ENCODE measurements at regions of chr1 and their contacts with region 1.

Region 1: DNA sequence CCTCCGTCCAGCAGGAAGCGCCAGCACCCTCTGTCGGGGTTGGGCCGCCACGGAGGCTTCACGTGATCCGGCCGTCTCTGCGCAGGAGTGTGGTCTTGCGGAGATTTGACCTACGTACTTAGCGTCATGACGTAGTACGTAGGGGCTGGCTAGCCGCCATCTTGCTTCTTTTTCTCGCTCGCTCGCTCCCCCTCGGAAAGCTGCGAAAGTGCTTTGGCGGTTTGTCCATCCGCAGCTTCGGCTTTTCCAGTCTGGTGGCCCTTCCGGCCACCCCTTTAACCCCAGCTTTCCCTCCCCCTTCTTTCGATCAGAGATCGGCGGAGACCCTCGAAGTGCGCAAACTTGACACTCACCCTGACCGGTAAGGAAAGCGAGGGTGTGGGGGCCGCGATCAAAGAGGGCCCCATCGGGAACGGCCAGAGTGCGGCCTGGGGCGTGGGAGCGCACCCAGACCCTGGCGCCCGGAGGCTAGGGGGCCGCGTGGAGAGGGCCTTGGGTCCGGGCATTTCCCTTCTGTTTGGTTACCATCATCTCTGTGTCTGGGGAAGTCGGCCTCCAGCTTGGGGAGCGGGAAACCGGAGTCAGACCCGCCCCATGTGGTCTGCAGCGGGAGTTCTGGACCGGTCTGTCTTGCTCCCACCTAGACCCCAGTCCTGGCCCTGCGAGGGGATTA is at the start of gene PRRC2C:
- DNase-seq: peak; percentile 100
- H3K4me3 Mint-ChIP-seq: peak within 1 kb of the TSS; percentile 80
- H3K27ac Mint-ChIP-seq: peak within 1 kb of the TSS; percentile 92
- H3K4me1 Mint-ChIP-seq: peaks cover 38% of the 10 kb centered on the region
- H3K27me3 Mint-ChIP-seq: no peaks in the 10 kb centered on the region
- CTCF ChIP-seq: peak; percentile 71
- total RNA-seq, gene PRRC2C: 296 and 298 TPM in 2 replicates

Region 2: DNA sequence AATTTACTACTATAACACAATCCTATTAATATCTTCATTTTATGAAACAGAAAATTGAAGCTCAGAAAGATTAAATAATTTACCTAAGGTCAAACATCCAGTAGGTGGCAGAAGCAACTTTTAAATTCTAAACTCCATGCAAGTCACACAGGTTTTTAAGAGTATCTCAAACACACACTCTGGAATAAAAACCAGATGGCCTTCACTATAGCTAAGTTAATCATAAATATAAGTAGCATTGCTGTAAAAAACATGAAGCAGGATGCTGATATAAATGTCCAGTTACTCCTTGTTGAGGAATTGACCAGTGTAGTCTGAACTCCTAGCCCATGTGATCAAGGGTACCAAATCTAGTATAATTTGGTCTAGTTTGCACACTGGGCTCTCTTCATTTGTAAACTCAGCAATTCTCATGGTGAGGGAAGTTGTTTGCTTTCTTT is 404.2 kb before region 1 on chr1:
- CTCF ChIA-PET with region 1: no interaction called
- POLR2A ChIA-PET with region 1: no interaction called
- intact Hi-C with region 1: loop called (anchors 5 kb)
- DNase-seq: peak; percentile 52
- H3K4me3 Mint-ChIP-seq: no peak overlapping the region
- H3K27ac Mint-ChIP-seq: no peak overlapping the region
- H3K4me1 Mint-ChIP-seq: no peaks in the 10 kb centered on the region
- H3K27me3 Mint-ChIP-seq: no peaks in the 10 kb centered on the region
- CTCF ChIP-seq: peak; percentile 34

Region 3: DNA sequence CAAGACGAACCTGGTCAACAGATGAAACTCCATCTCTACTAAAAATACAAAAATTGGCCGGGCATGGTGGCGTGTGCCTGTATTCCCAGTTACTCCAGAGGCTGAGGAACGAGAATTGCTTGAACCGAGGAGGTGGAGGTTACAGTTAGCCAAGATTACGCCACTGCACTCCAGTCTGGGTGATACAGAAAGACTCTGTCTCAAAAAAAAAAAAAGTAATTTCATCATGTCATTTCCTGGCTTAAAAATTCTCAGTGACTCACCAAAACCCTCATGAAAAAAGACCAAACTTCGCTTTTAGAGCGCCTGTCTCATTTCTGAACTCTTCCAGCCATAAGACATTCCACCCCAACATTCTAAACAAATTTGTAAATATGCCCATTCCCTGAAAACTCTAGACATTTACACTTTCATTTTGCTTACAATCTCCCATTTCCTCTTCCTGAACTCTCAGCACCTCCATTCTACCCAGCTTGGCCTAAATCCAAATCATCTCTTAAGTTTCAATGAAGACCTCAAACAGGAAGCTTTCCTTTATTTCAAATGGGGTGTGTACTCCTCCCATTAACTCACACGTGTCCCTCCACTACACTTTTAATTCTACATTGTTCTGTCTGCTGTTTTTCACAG is 50.7 kb before region 1 on chr1:
- CTCF ChIA-PET with region 1: interaction called, 33 read pairs
- POLR2A ChIA-PET with region 1: interaction called, 38 read pairs
- intact Hi-C with region 1: loop called (anchors 1 kb)
- DNase-seq: peak; percentile 96
- H3K4me3 Mint-ChIP-seq: peak overlapping the region; percentile 58
- H3K27ac Mint-ChIP-seq: peak overlapping the region; percentile 78
- H3K4me1 Mint-ChIP-seq: peaks cover 31% of the 10 kb centered on the region
- H3K27me3 Mint-ChIP-seq: no peaks in the 10 kb centered on the region
- CTCF ChIP-seq: no peak

Region 4: GRCh38 chr1:171457412-171457811 is 28.1 kb before region 1 on chr1:
- CTCF ChIA-PET with region 1: interaction called, 12 read pairs
- POLR2A ChIA-PET with region 1: interaction called, 12 read pairs
- intact Hi-C with region 1: no loop called
- DNase-seq: peak; percentile 61
- H3K4me3 Mint-ChIP-seq: no peak overlapping the region
- H3K27ac Mint-ChIP-seq: no peak overlapping the region
- H3K4me1 Mint-ChIP-seq: no peaks in the 10 kb centered on the region
- H3K27me3 Mint-ChIP-seq: no peaks in the 10 kb centered on the region
- CTCF ChIP-seq: no peak

Region 5: DNA sequence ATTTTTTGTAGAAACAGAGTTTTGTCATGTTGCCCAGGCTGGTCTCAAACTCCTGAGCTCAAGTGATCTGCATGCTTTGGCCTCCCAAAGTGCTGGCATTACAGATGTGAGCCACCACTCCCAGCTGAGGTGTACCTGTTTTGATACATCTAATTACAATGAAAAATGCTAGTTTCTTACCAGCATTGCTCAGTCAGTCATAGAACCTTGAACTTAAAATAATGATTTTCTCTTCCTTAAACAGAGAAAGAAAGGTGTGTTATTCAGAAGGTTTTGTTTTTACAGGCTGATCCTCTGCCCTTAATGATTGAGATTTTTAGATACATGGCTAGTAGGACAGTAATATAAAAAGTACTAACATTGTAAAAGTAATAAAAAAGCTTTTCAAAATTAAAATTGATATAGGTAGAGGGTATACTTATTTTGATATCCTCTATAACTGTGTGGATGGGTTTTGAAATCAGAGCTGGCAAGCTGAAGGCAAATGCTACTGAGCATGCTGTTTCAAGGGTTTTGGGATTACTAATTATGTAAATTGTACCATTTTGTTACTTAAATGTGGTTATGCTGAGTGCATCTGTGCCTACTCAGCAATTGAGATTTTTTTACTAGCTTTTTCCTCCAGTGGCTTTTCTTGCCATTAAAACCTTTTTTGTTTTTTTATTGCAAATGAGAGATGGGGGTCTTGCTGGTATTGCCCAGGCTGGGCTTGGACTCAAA is 16.0 kb after region 1 on chr1:
- CTCF ChIA-PET with region 1: interaction called, 73 read pairs
- POLR2A ChIA-PET with region 1: interaction called, 34 read pairs
- intact Hi-C with region 1: no loop called
- DNase-seq: no peak
- H3K4me3 Mint-ChIP-seq: no peak overlapping the region
- H3K27ac Mint-ChIP-seq: peak overlapping the region; percentile 42
- H3K4me1 Mint-ChIP-seq: peaks cover 44% of the 10 kb centered on the region
- H3K27me3 Mint-ChIP-seq: no peaks in the 10 kb centered on the region
- CTCF ChIP-seq: no peak

Region 6: DNA sequence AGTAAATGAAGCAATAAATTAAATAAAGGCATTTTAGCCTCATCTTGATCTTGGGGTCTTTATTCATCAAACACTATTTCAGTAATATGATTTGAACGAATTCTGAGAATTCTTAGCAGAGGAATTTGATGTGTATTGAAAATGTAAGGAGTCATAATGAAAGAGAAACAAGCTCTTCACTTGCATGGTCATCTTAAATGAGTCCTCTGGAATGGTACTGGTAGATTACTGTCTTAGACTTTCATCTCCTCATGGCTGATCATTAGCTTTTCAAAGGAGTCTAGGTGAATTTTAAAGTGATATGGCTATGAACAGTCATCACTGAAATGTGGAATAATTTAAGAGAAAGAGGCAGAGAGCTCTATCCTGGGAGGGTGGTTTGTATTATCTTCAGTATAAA is 29.8 kb after region 1 on chr1:
- CTCF ChIA-PET with region 1: interaction called, 3 read pairs
- POLR2A ChIA-PET with region 1: interaction called, 10 read pairs
- intact Hi-C with region 1: no loop called
- DNase-seq: no peak
- H3K4me3 Mint-ChIP-seq: no peak overlapping the region
- H3K27ac Mint-ChIP-seq: no peak overlapping the region
- H3K4me1 Mint-ChIP-seq: peaks cover 11% of the 10 kb centered on the region
- H3K27me3 Mint-ChIP-seq: no peaks in the 10 kb centered on the region
- CTCF ChIP-seq: no peak

Region 7: DNA sequence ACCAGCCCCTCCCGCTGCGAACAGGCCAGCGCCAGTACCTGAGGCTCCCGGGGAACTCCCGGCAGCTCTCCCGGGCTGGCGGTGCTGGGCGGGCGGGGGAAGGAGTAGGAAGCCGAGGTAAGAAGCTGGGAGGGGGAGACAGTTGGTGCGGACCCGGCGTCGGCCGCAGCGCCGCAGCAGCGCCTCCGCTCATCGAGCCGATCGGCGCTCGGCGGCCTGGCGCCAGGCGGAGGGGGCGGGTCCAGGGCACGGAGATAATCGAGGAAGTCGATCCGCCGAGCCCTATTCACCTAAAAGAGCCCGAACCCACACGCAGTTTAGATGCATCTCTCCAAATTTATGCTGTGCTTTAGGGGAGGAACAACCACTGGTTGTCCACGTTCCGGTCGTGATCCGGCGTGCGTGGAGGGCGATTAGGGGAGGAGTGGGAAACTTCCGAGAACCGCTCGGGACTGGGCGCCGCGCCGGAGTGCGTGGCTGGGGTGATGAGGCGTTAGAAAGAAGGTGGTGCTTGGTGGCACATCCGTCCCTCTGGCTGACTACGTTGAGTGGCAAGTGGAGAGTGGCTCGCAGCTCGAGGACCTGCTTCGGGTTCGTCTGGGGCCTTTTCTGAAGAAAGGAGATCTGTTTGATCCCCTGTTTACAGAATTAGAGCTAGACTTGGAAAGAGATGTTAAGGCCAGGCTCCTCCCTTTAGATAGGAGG is 256.5 kb after region 1 on chr1 and contains the start of gene VAMP4:
- CTCF ChIA-PET with region 1: interaction called, 6 read pairs
- POLR2A ChIA-PET with region 1: interaction called, 30 read pairs
- intact Hi-C with region 1: loop called (anchors 10 kb)
- DNase-seq: peak; percentile 89
- H3K4me3 Mint-ChIP-seq: peak within 1 kb of the TSS; percentile 87
- H3K27ac Mint-ChIP-seq: peak within 1 kb of the TSS; percentile 98
- H3K4me1 Mint-ChIP-seq: peaks cover 45% of the 10 kb centered on the region
- H3K27me3 Mint-ChIP-seq: no peaks in the 10 kb centered on the region
- CTCF ChIP-seq: no peak
- total RNA-seq, gene VAMP4: 20.2 and 21.1 TPM in 2 replicates

Region 8: DNA sequence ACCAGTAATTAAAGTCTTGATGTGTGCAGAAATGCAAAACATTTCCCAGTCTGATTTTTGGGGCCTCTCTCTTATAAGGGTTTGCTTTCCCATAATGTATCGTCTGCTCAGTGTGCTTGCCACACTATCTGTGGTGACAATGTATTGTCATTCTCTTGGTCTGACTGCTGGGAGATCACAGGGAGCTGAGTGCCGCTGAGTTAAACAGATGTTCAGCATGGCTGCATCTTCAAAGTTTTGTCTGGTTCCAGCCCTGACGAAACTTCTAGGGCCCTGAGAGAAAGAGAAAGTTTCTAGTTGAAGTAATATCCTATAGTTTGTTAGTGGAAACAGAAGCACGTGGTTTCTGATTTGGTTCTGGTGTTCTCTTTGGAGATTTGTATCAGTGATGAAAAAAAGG is 398.3 kb after region 1 on chr1:
- CTCF ChIA-PET with region 1: no interaction called
- POLR2A ChIA-PET with region 1: no interaction called
- intact Hi-C with region 1: no loop called
- DNase-seq: no peak
- H3K4me3 Mint-ChIP-seq: no peak overlapping the region
- H3K27ac Mint-ChIP-seq: peak overlapping the region; percentile 10
- H3K4me1 Mint-ChIP-seq: peaks cover 18% of the 10 kb centered on the region
- H3K27me3 Mint-ChIP-seq: no peaks in the 10 kb centered on the region
- CTCF ChIP-seq: no peak

Measured in MCF 10A (cell line).